ENCODE measurements at regions of chr3 and their contacts with region 1.

Region 1: DNA sequence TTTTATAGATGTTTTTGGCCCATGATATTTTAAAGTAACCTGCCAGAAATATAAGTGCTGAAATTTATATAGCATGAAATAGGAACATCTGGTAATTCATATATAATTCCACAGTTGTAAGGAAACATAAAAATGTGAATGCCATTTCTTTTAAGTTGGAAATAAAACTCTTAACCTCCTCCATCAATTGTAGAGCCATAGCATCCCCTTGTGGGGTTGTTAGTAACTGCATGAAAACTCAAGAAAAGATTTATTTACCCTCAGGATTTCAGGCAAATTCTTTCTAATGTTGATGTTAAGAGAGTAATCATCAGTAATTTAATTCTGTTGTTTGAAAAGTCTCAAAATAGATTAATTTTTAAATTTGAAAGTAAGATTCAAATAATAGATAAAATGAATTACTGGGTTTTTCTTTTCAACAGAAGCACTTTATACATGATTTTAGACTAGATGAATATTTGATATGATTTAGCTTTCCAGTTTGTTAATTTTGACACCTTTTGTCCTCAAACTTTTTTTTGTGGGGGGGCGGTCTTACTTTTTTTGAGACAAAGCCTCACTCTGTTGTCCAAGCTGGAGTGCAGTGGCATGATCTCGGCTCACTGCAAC is 74.7 kb downstream of the RASA2 start:
- DNase-seq: peak; percentile 63
- ATAC-seq: no peak
- H3K4me3 ChIP-seq: no peak overlapping the region
- H3K27ac ChIP-seq: no peak overlapping the region
- H3K4me1 ChIP-seq: no peaks in the 10 kb centered on the region
- H3K27me3 ChIP-seq: no peaks in the 10 kb centered on the region
- CTCF ChIP-seq: peak; percentile 79
- EP300 ChIP-seq: no peak
- POLR2A ChIP-seq: no peak
- RAD21 ChIP-seq: peak; percentile 80

Region 2: GRCh38 chr3:141303481-141304223 is 257.9 kb before region 1 on chr3:
- CTCF ChIA-PET with region 1: interaction called, 4 read pairs
- POLR2A ChIA-PET with region 1: no interaction called
- in situ Hi-C with region 1: loop called (anchors 10 kb)
- intact Hi-C with region 1: loop called (anchors 5 kb)
- DNase-seq: peak; percentile 64
- ATAC-seq: peak; percentile 80
- H3K4me3 ChIP-seq: no peak overlapping the region
- H3K27ac ChIP-seq: no peak overlapping the region
- H3K4me1 ChIP-seq: peaks cover 6% of the 10 kb centered on the region
- H3K27me3 ChIP-seq: no peaks in the 10 kb centered on the region
- CTCF ChIP-seq: peak; percentile 74
- EP300 ChIP-seq: no peak
- POLR2A ChIP-seq: no peak
- RAD21 ChIP-seq: 0 out of 2 replicates have a peak, but pooled peaks have one; percentile 28

Region 3: DNA sequence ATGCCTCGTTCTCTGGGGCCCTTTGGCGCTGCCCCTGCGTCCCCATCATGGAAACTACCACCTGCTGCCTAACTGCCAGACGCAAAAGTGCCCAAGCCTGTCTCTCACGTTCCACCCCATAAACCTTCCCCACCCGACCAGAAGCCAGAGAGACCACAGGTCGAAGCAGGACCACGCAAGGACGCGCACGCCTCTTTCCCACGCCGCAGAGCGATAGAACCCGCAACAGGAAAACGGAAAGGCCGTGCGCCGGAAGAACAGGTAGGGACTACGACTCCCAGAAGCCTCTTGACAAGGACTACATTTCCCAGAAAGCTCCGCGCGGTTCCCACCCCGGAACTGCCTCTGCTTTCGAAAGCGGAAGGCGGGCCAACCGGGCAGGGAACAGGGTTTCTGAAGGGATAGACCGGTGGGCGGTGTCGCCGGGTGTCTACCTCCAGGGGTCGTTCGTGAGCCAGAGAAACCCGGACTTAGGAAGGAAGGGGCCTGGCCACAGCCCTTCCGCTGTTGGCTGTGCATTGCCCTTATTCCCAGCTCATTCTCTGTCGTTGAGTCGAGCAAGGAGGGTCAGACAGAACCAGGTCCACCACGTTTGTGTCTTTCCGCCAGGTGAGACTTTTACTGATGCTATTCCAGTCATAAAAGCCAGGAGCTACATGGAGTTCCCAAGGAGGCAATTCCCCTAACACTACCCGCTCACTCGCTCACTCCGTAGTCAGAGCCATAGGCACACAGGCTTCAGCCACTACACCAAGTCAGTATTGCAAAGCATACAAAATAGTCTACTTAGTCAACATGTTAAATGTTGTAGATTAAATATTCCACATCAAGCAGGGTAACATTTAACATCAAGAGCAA is 249.8 kb before region 1 on chr3:
- CTCF ChIA-PET with region 1: interaction called, 4 read pairs
- POLR2A ChIA-PET with region 1: no interaction called
- in situ Hi-C with region 1: loop called (anchors 10 kb)
- intact Hi-C with region 1: loop called (anchors 5 kb)
- DNase-seq: peak; percentile 96
- ATAC-seq: peak; percentile 92
- H3K4me3 ChIP-seq: peak overlapping the region; percentile 65 to 84 (median 83)
- H3K27ac ChIP-seq: peak overlapping the region; percentile 34
- H3K4me1 ChIP-seq: peaks cover 28% of the 10 kb centered on the region
- H3K27me3 ChIP-seq: no peaks in the 10 kb centered on the region
- CTCF ChIP-seq: peak; percentile 97
- EP300 ChIP-seq: peak in 1 of 2 experiments; percentile 45; a peak in 1 of 4 replicates
- POLR2A ChIP-seq: peak; percentile 71 to 95
- RAD21 ChIP-seq: peak; percentile 93

Region 4: DNA sequence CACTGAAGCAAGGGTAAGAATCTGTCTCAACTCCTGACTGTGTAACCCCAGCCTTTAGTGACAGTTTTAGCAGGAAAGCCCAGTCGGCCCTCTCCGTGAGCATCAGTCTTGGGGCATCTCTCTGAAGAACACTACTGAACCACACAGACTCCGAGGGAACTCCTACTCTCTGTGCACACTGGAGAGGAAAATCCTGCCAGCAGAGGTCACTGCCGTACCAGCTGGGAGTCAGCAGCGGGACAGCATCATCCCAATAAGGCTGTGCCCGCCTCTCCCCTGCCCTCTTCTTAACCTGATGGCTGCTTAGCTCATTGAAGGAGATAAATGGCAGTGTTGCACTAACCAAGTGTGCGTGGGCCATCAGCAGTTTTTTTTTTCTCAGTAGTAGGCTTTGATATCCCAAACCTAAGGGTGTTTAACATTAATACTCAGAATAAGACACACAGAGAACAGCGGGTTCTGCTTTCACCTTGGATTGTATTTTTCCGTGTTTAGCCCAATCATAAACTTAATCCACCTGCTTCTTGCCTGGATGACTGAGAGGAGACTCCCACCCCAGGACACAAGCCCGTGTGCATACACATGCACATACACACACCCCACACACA is 101.3 kb before region 1 on chr3:
- CTCF ChIA-PET with region 1: interaction called, 42 read pairs
- POLR2A ChIA-PET with region 1: no interaction called
- in situ Hi-C with region 1: loop called (anchors 5 kb)
- intact Hi-C with region 1: loop called (anchors 1 kb)
- DNase-seq: peak; percentile 75
- ATAC-seq: peak; percentile 92
- H3K4me3 ChIP-seq: no peak overlapping the region
- H3K27ac ChIP-seq: no peak overlapping the region
- H3K4me1 ChIP-seq: peaks cover 77% of the 10 kb centered on the region
- H3K27me3 ChIP-seq: no peaks in the 10 kb centered on the region
- CTCF ChIP-seq: peak; percentile 95
- EP300 ChIP-seq: no peak
- POLR2A ChIP-seq: no peak
- RAD21 ChIP-seq: peak; percentile 86

Region 5: GRCh38 chr3:141477224-141477623 is 84.3 kb before region 1 on chr3:
- CTCF ChIA-PET with region 1: interaction called, 21 read pairs
- POLR2A ChIA-PET with region 1: no interaction called
- in situ Hi-C with region 1: no loop called
- intact Hi-C with region 1: loop called (anchors 1 kb)
- DNase-seq: peak; percentile 20
- ATAC-seq: peak; percentile 61; the same call in 2 of the 3 replicates
- H3K4me3 ChIP-seq: no peak overlapping the region
- H3K27ac ChIP-seq: no peak overlapping the region
- H3K4me1 ChIP-seq: peaks cover 5% of the 10 kb centered on the region
- H3K27me3 ChIP-seq: 0 out of 5 replicates have a peak, but pooled peaks cover 0 to 9% of the 10 kb centered on the region in 2 experiments
- CTCF ChIP-seq: no peak
- EP300 ChIP-seq: no peak
- POLR2A ChIP-seq: no peak
- RAD21 ChIP-seq: no peak

Region 6: DNA sequence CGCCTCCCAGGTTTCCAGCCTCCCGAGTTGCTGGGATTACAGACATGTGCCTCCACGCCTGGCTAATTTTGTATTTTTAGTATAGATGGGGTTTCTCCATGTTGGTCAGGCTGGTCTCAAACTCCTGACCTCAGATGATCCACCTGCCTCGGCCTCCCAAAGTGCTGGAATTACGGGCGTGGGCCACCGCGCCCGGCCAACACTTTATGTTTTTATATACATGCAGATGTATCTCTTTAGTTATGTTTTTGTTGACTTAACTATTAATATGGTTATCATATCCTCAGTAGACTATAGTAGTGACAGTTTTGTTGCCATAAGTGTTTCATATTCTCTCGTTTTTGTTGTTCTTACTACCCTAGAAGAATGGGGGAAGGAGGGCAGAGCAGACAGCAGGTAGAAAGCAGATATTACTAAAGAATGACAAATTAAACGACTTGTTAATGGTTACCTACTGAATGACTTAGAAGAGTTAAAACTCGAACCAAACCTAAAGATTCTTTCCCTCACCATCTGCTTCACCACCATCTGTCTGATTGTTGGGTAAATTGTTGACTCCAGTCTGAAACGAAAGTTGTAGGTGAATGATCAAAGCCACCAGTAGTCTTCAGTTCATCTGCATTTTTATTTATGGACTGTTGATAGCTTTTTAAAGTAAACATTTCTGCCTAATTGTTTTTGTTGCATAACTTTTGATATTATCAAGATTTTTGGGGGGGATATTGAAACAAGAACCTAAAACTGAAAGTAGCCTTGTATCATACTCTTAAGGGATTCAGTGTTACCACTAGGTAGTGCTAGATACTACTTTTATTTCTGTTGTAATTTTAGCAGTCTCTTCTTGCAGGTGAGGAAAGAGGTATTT is 14.6 kb after region 1 on chr3:
- CTCF ChIA-PET with region 1: no interaction called
- POLR2A ChIA-PET with region 1: no interaction called
- in situ Hi-C with region 1: no loop called
- intact Hi-C with region 1: no loop called
- DNase-seq: peak; percentile 7
- ATAC-seq: peak; percentile 61; the same call in 2 of the 3 replicates
- H3K4me3 ChIP-seq: no peak overlapping the region
- H3K27ac ChIP-seq: no peak overlapping the region
- H3K4me1 ChIP-seq: no peaks in the 10 kb centered on the region
- H3K27me3 ChIP-seq: no peaks in the 10 kb centered on the region
- CTCF ChIP-seq: peak; percentile 36
- EP300 ChIP-seq: no peak
- POLR2A ChIP-seq: no peak
- RAD21 ChIP-seq: no peak

Measured in HepG2 (cell line).